GM12878 (cell line): ENCODE measurements at regions of chr13 and their contacts with region 1.

Region 1: GRCh38 chr13:52723181-52723580 is 16.4 kb downstream of the CNMD start:
- DNase-seq: no peak
- ATAC-seq: no peak
- H3K4me3 ChIP-seq: no peak overlapping the region
- H3K27ac ChIP-seq: no peak overlapping the region
- H3K4me1 ChIP-seq: no peaks in the 10 kb centered on the region
- H3K27me3 ChIP-seq: no peaks in the 10 kb centered on the region
- CTCF ChIP-seq: no peak
- EP300 ChIP-seq: no peak
- POLR2A ChIP-seq: no peak
- RAD21 ChIP-seq: no peak

Region 2: GRCh38 chr13:52659340-52659739 is 63.8 kb before region 1 on chr13:
- CTCF ChIA-PET with region 1: interaction called, 33 read pairs
- POLR2A ChIA-PET with region 1: interaction called, 7 read pairs
- RAD21 ChIA-PET with region 1: interaction called, 64 read pairs
- SMC1A ChIA-PET with region 1: interaction called, 42 read pairs
- in situ Hi-C with region 1: no loop called
- intact Hi-C with region 1: no loop called
- DNase-seq: no peak
- ATAC-seq: no peak
- H3K4me3 ChIP-seq: no peak overlapping the region
- H3K27ac ChIP-seq: no peak overlapping the region
- H3K4me1 ChIP-seq: peaks cover 5% of the 10 kb centered on the region; the same call in 1 of the 2 replicates
- H3K27me3 ChIP-seq: no peaks in the 10 kb centered on the region
- CTCF ChIP-seq: no peak
- EP300 ChIP-seq: no peak
- POLR2A ChIP-seq: no peak
- RAD21 ChIP-seq: no peak

Region 3: DNA sequence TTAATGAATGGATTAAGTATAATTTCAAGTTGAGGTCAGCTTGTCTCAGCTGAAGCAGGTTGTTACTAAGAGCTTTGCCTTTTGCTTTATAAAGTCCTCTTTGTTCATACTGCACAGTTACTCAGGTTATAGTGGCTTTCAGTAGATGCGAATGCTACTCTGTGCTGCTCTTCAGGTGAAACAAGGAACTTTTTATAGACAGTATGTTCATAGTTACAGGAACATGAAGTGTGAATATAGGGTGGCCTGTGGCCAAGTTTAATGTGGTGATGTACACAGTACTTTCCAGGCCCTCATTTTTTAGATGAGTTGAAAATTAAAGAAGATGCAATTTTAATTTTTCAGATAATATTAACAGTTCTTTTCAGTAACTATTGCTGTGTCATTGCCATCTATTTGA is 49.7 kb before region 1 on chr13:
- CTCF ChIA-PET with region 1: interaction called, 4 read pairs
- POLR2A ChIA-PET with region 1: interaction called, 5 read pairs
- RAD21 ChIA-PET with region 1: interaction called, 23 read pairs
- SMC1A ChIA-PET with region 1: interaction called, 40 read pairs
- in situ Hi-C with region 1: no loop called
- intact Hi-C with region 1: no loop called
- DNase-seq: no peak
- ATAC-seq: peak; percentile 42
- H3K4me3 ChIP-seq: no peak overlapping the region
- H3K27ac ChIP-seq: no peak overlapping the region
- H3K4me1 ChIP-seq: no peaks in the 10 kb centered on the region
- H3K27me3 ChIP-seq: no peaks in the 10 kb centered on the region
- CTCF ChIP-seq: no peak
- EP300 ChIP-seq: no peak
- POLR2A ChIP-seq: no peak
- RAD21 ChIP-seq: no peak

Region 4: DNA sequence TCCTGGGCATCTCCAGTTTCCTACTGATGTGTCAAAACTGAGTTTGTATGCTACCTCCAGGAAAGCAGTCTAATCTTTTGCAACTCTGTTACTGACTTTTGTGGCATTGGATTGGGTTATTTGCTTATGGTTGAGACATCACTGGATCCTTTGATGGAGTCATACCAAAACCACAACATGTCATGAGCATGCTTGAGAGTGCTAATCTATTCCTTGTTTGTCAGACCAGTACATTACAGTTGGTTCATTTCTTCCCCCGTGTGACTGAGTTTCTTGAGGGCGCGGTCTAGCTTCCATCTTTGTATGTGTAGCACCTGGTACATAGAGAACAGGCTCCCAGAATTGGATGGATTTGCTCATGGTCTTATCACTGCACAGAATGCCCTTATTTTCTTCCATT is 27.3 kb before region 1 on chr13:
- CTCF ChIA-PET with region 1: interaction called, 26 read pairs
- POLR2A ChIA-PET with region 1: interaction called, 5 read pairs
- RAD21 ChIA-PET with region 1: interaction called, 8 read pairs
- SMC1A ChIA-PET with region 1: interaction called, 20 read pairs
- in situ Hi-C with region 1: no loop called
- intact Hi-C with region 1: no loop called
- DNase-seq: peak; percentile 3
- ATAC-seq: peak; percentile 90
- H3K4me3 ChIP-seq: no peak overlapping the region
- H3K27ac ChIP-seq: no peak overlapping the region
- H3K4me1 ChIP-seq: no peaks in the 10 kb centered on the region
- H3K27me3 ChIP-seq: no peaks in the 10 kb centered on the region
- CTCF ChIP-seq: no peak
- EP300 ChIP-seq: no peak
- POLR2A ChIP-seq: no peak
- RAD21 ChIP-seq: no peak

Region 5: GRCh38 chr13:52738719-52739467 is 15.7 kb after region 1 on chr13:
- CTCF ChIA-PET with region 1: interaction called, 47 read pairs
- POLR2A ChIA-PET with region 1: interaction called, 31 read pairs
- RAD21 ChIA-PET with region 1: interaction called, 46 read pairs
- SMC1A ChIA-PET with region 1: interaction called, 87 read pairs
- in situ Hi-C with region 1: no loop called
- intact Hi-C with region 1: no loop called
- DNase-seq: no peak
- ATAC-seq: peak; percentile 68
- H3K4me3 ChIP-seq: no peak overlapping the region
- H3K27ac ChIP-seq: no peak overlapping the region
- H3K4me1 ChIP-seq: no peaks in the 10 kb centered on the region; the same call in 1 of the 2 replicates
- H3K27me3 ChIP-seq: peaks cover 2 to 14% of the 10 kb centered on the region in 2 experiments; a peak in 3 of 4 replicates
- CTCF ChIP-seq: peak; percentile 27 to 42 (median 27); a peak in 4 of 6 replicates
- EP300 ChIP-seq: no peak
- POLR2A ChIP-seq: no peak
- RAD21 ChIP-seq: peak; percentile 47

Region 6: GRCh38 chr13:52804202-52804641 is 81.0 kb after region 1 on chr13:
- CTCF ChIA-PET with region 1: interaction called, 82 read pairs
- POLR2A ChIA-PET with region 1: interaction called, 39 read pairs
- RAD21 ChIA-PET with region 1: interaction called, 161 read pairs
- SMC1A ChIA-PET with region 1: interaction called, 137 read pairs
- in situ Hi-C with region 1: no loop called
- intact Hi-C with region 1: loop called (anchors 2 kb)
- DNase-seq: no peak
- ATAC-seq: no peak
- H3K4me3 ChIP-seq: no peak overlapping the region
- H3K27ac ChIP-seq: no peak overlapping the region
- H3K4me1 ChIP-seq: no peaks in the 10 kb centered on the region
- H3K27me3 ChIP-seq: peaks cover 0 to under 1% of the 10 kb centered on the region in 2 experiments; a peak in 1 of 4 replicates
- CTCF ChIP-seq: no peak
- EP300 ChIP-seq: no peak
- POLR2A ChIP-seq: no peak
- RAD21 ChIP-seq: no peak